ENCODE measurements at regions of chr5 and their contacts with region 1.

Region 1: DNA sequence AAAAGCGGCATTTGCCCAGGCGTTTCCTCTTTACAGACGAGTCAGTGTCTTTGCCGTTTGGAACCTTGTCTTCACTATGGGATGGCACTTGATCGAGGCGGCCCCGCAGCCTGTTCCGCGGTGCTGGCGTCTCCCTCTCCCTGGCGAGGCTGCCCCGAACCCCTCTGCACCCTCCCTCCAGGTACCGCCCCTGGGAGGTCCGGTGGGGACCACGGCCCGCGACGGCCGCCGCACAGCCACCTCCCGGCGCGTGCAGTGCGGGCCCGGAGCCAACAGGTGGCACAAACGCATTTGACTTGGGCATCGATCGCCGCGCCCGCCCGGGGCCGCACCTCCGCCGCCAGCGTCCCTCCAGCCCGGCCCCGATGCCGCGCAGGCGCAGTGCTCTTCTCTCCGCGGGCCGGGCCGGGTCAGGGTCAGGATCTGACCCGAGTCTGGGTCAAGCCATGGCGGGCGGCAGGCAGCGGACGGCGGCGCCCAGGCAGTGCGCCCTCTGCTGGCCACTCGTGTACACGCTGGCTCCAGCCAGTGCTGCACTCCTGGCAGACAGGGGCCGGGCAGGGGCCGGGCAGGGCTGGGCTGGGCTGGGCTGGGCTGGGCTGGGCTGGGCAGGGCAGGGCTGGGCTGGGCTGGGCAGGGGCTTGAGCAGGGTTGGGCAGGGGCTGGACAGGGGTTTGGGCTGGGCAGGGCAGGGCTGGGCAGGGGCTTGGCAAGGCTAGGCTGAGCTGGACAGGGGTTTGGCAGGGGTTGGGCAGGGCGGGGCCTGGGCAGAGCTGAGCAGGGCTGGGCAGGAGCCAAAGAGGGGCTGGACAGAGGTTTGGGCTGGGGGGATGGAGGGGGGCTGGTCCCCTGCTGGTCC is 155.8 kb upstream of the IRX4 start:
- DNase-seq: peak; percentile 13 to 74 (median 46)
- ATAC-seq: peak; percentile 71
- H3K4me3 ChIP-seq: peak overlapping the region; percentile 28
- H3K4me3 Mint-ChIP-seq: peak overlapping the region; percentile 66
- H3K27ac ChIP-seq: no peak overlapping the region
- H3K27ac Mint-ChIP-seq: no peak overlapping the region
- H3K4me1 ChIP-seq: peaks cover 3% of the 10 kb centered on the region
- H3K4me1 Mint-ChIP-seq: no peaks in the 10 kb centered on the region
- H3K27me3 ChIP-seq: peaks cover 18 to 46% of the 10 kb centered on the region in 2 experiments
- H3K27me3 Mint-ChIP-seq: peaks cover 58% of the 10 kb centered on the region
- CTCF ChIP-seq: peak; percentile 88

Region 2: DNA sequence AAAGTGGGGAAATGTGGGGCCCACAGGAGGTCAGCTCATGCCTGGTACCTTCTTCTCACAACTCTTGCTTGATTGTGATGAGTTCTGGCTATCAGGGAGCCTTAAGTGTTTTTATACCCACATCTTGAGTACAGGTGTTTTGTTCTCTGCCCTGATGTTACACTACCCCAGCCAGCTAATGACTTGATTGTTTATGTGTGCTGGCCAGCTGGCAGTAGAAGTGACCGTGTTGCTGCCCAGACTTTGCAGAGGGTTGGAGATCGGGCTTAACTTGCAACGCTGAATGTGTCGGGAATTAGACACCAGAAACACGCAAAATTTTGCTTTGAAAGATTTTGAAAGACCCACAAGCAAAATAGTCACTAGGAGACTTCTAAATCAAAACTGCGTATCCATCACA is 1237.1 kb before region 1 on chr5:
- CTCF ChIA-PET with region 1: no interaction called
- POLR2A ChIA-PET with region 1: no interaction called
- intact Hi-C with region 1: no loop called
- DNase-seq: no peak
- ATAC-seq: no peak
- H3K4me3 ChIP-seq: no peak overlapping the region
- H3K4me3 Mint-ChIP-seq: no peak overlapping the region
- H3K27ac ChIP-seq: no peak overlapping the region
- H3K27ac Mint-ChIP-seq: no peak overlapping the region
- H3K4me1 ChIP-seq: no peaks in the 10 kb centered on the region
- H3K4me1 Mint-ChIP-seq: no peaks in the 10 kb centered on the region
- H3K27me3 ChIP-seq: no peaks in the 10 kb centered on the region
- H3K27me3 Mint-ChIP-seq: peaks cover 14% of the 10 kb centered on the region
- CTCF ChIP-seq: no peak

Region 3: GRCh38 chr5:1737790-1738405 is 300.7 kb before region 1 on chr5:
- CTCF ChIA-PET with region 1: no interaction called
- POLR2A ChIA-PET with region 1: no interaction called
- intact Hi-C with region 1: loop called in 1 of 2 experiments (anchors 1 kb)
- DNase-seq: peak in 12 of 14 experiments; percentile 14 to 69 (median 32)
- ATAC-seq: peak; percentile 59
- H3K4me3 ChIP-seq: no peak overlapping the region
- H3K4me3 Mint-ChIP-seq: no peak overlapping the region
- H3K27ac ChIP-seq: no peak overlapping the region
- H3K27ac Mint-ChIP-seq: no peak overlapping the region
- H3K4me1 ChIP-seq: no peaks in the 10 kb centered on the region
- H3K4me1 Mint-ChIP-seq: no peaks in the 10 kb centered on the region
- H3K27me3 ChIP-seq: peaks cover 2 to 6% of the 10 kb centered on the region in 2 experiments
- H3K27me3 Mint-ChIP-seq: peaks cover 31% of the 10 kb centered on the region
- CTCF ChIP-seq: peak; percentile 86

Region 4: GRCh38 chr5:1763548-1763911 is 275.0 kb before region 1 on chr5:
- CTCF ChIA-PET with region 1: no interaction called
- POLR2A ChIA-PET with region 1: no interaction called
- intact Hi-C with region 1: loop called in 1 of 2 experiments (anchors 1 kb)
- DNase-seq: peak in 11 of 14 experiments; percentile 12 to 60 (median 33)
- ATAC-seq: peak; percentile 32
- H3K4me3 ChIP-seq: no peak overlapping the region
- H3K4me3 Mint-ChIP-seq: no peak overlapping the region
- H3K27ac ChIP-seq: no peak overlapping the region
- H3K27ac Mint-ChIP-seq: no peak overlapping the region
- H3K4me1 ChIP-seq: no peaks in the 10 kb centered on the region
- H3K4me1 Mint-ChIP-seq: no peaks in the 10 kb centered on the region
- H3K27me3 ChIP-seq: peaks cover 0 to 6% of the 10 kb centered on the region in 2 experiments
- H3K27me3 Mint-ChIP-seq: peaks cover 22% of the 10 kb centered on the region
- CTCF ChIP-seq: peak; percentile 69

Region 5: GRCh38 chr5:1901061-1901460 is 137.5 kb before region 1 on chr5:
- CTCF ChIA-PET with region 1: no interaction called
- POLR2A ChIA-PET with region 1: no interaction called
- intact Hi-C with region 1: no loop called
- DNase-seq: no peak
- ATAC-seq: no peak
- H3K4me3 ChIP-seq: no peak overlapping the region
- H3K4me3 Mint-ChIP-seq: no peak overlapping the region
- H3K27ac ChIP-seq: no peak overlapping the region
- H3K27ac Mint-ChIP-seq: no peak overlapping the region
- H3K4me1 ChIP-seq: no peaks in the 10 kb centered on the region
- H3K4me1 Mint-ChIP-seq: no peaks in the 10 kb centered on the region
- H3K27me3 ChIP-seq: peaks cover 8 to 13% of the 10 kb centered on the region in 2 experiments
- H3K27me3 Mint-ChIP-seq: peaks cover 55% of the 10 kb centered on the region
- CTCF ChIP-seq: no peak

Region 6: GRCh38 chr5:2311851-2312250 is 273.3 kb after region 1 on chr5:
- CTCF ChIA-PET with region 1: no interaction called
- POLR2A ChIA-PET with region 1: no interaction called
- intact Hi-C with region 1: no loop called
- DNase-seq: no peak
- ATAC-seq: no peak
- H3K4me3 ChIP-seq: no peak overlapping the region
- H3K4me3 Mint-ChIP-seq: no peak overlapping the region
- H3K27ac ChIP-seq: no peak overlapping the region
- H3K27ac Mint-ChIP-seq: no peak overlapping the region
- H3K4me1 ChIP-seq: no peaks in the 10 kb centered on the region
- H3K4me1 Mint-ChIP-seq: no peaks in the 10 kb centered on the region
- H3K27me3 ChIP-seq: no peaks in the 10 kb centered on the region
- H3K27me3 Mint-ChIP-seq: no peaks in the 10 kb centered on the region
- CTCF ChIP-seq: no peak